Esophagus muscularis mucosa (tissue), 4 donors: ENCODE measurements at regions of chr4 and their contacts with region 1.

Region 1: GRCh38 chr4:87093443-87094123 is 126.8 kb downstream of the KLHL8 start:
- DNase-seq: no peak
- H3K4me3 ChIP-seq: no peak overlapping the region
- H3K27ac ChIP-seq: peak overlapping the region; percentile 27 to 58 (median 48)
- H3K4me1 ChIP-seq: peaks cover 25 to 56% (median 41%) of the 10 kb centered on the region in 4 donors
- H3K27me3 ChIP-seq: no peaks in the 10 kb centered on the region
- CTCF ChIP-seq: peak; percentile 49 to 68 (median 63)
- EP300 ChIP-seq: no peak
- POLR2A ChIP-seq: no peak

Region 2: DNA sequence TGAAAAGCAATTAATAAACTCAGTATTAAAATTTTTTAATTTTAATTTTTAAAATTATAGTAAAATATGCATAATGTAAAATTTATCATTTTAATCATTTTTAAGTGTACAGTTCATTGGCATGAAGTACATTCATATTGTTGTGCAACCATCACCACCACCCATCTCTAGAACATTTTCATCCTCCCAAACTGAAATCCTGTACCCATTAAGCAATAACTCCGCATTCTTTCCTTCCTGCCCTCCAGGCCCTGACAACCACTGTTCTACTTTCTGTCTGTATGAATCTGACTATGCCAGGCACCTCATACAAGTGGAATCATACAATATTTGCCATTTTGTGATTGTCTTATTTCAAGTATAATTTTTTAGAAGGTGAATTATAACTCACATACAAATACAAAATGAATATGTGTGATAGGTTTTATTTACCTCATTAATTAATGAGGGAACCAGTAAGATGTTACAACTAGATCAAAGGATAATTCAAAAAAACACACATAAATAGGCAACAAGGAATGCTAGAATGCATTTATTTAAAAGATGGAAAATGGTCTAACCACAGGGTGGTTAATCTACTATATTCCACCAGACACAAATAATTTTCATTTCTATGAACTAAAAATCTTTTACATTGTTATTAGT is 171.9 kb before region 1 on chr4:
- intact Hi-C with region 1: loop called (anchors 2 kb)
- DNase-seq: no peak
- H3K4me3 ChIP-seq: no peak overlapping the region
- H3K27ac ChIP-seq: no peak overlapping the region
- H3K4me1 ChIP-seq: peaks cover 0 to 8% (median 3%) of the 10 kb centered on the region in 4 donors
- H3K27me3 ChIP-seq: no peaks in the 10 kb centered on the region
- CTCF ChIP-seq: no peak
- EP300 ChIP-seq: no peak
- POLR2A ChIP-seq: no peak

Region 3: DNA sequence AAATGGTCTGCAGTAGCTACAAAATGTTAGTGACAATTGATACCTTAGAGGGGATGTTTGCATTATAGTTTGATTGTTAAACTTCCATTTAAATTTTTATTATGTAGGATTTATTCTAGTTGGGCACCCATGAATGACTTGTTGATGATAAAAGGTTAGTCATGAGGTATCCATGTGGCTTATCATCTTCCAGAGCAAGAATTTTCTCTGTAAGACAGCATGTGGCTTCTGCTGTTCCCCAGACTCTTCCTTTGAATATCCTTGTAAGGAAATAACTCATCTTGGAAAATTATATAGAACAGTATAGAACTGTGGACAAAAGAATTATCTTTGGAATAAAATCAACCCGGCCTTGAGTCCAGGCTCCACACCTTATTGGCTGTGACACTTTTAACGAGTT is 166.9 kb after region 1 on chr4:
- intact Hi-C with region 1: no loop called
- DNase-seq: no peak
- H3K4me3 ChIP-seq: no peak overlapping the region
- H3K27ac ChIP-seq: no peak overlapping the region
- H3K4me1 ChIP-seq: no peaks in the 10 kb centered on the region
- H3K27me3 ChIP-seq: no peaks in the 10 kb centered on the region
- CTCF ChIP-seq: no peak
- EP300 ChIP-seq: no peak
- POLR2A ChIP-seq: no peak